ENCODE measurements at regions of chr1 and their contacts with region 1.

Region 1: DNA sequence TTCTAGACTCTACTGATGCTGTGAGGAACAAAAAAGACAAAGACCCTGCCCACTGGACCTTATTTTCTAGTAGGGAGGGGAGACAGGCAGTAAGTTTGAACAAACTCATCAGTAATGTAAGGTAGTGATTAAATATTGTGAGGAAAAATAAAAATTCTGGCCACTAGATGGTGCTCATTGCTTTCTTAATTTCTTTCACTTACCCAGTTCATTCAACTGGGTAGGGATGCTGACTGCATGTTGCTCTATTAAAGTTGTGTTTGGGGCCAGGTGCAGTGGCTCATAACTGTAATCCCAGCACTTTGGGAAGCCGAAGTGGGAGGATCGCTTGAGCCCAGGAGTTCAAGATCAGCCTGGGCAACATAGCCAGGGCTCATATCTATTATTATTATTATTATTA is 6.3 kb upstream of the KYAT3 start:
- DNase-seq: no peak
- H3K4me3 ChIP-seq: no peak overlapping the region
- H3K27ac ChIP-seq: no peak overlapping the region
- H3K4me1 ChIP-seq: peaks cover 2% of the 10 kb centered on the region
- H3K27me3 ChIP-seq: no peaks in the 10 kb centered on the region
- CTCF ChIP-seq: peak; percentile 66

Region 2: GRCh38 chr1:89358287-89358893 is 359.7 kb after region 1 on chr1:
- intact Hi-C with region 1: loop called (anchors 5 kb)
- DNase-seq: peak; percentile 73
- H3K4me3 ChIP-seq: no peak overlapping the region
- H3K27ac ChIP-seq: no peak overlapping the region
- H3K4me1 ChIP-seq: peaks cover 11% of the 10 kb centered on the region
- H3K27me3 ChIP-seq: no peaks in the 10 kb centered on the region
- CTCF ChIP-seq: peak; percentile 89

Region 3: DNA sequence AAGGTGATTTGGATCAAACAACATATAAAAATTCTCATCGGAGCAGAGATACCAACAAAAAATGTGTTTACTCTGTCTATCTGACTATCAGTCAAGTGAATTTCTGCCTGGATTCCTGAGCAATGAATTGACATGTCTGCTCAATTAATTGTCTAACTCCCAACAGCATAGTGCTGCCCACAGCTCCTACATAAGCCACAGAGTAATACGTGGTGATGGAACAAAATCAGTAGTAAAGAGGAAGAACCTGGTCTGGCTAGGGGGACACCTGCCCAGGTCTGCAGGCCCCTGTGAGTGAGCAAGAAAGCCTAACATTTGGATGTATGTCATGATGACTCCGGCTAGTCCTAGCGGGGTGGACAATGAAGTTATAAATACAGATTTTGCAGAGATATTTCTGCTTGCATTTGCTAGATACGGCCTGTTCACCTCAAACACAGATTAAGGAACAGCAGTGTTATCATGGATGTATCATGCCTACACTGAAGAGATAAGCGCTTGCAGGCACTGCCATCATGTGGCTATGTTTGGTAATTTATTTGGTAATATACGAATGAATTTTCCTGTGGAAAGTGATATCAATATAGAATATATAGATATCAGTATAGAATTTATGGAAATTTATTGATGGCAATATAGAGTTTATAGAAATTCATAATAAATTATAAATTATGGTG is 456.3 kb after region 1 on chr1:
- intact Hi-C with region 1: loop called (anchors 5 kb)
- DNase-seq: no peak
- H3K4me3 ChIP-seq: no peak overlapping the region
- H3K27ac ChIP-seq: no peak overlapping the region
- H3K4me1 ChIP-seq: no peaks in the 10 kb centered on the region
- H3K27me3 ChIP-seq: no peaks in the 10 kb centered on the region
- CTCF ChIP-seq: peak; percentile 72

Measured in left ventricle myocardium inferior (tissue), 1 donor.